Mucosa of descending colon (tissue), 3 donors: ENCODE measurements at regions of chr3 and their contacts with region 1.

Region 1: DNA sequence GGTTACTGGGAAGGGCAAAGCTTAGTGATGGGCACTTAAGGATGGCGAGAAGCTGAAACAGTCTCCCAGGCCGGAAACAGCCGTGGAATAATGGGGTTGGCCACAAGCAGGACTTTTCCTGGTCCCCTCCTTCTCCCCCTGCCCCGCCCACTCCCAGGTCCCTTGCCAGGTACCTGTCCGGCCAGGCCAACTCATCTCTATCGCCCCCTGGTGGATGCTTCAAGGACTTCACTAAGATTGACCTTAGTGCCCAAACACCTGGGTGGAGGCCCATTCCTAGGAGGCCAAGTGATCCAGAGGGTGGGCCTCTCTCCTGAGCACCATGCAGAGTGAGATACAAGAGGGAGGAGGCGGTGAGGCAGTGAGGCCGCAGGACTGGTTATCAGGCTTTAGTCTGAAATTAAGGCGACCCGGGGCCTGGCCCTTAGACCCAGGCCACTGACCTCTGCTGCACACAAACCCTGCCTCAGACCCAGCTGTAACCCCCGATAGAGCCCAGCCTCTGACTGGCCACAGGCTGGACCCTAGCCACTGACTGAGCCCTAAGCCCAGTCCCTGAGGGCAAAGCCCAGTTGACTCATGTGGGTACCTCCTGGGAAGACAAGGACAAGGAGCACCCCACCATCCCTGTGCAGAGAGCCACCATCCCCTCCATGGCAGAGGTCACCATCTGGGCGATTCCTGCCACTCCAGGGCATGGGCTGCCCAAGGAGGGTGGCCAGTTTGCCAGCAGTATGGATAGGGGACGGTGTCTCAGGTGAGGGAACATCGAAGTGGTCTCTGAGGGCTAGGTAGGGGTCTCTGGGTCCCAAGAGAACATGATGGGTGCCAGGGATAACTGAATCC is 37.6 kb downstream of the VIPR1 start:
- DNase-seq: peak; percentile 75 to 89 (median 81)
- ATAC-seq: peak; percentile 81
- H3K4me3 ChIP-seq: no peak overlapping the region
- H3K4me1 ChIP-seq: peaks cover 15% of the 10 kb centered on the region
- CTCF ChIP-seq: peak; percentile 73

Region 2: GRCh38 chr3:42229942-42230688 is 310.0 kb before region 1 on chr3:
- intact Hi-C with region 1: no loop called
- DNase-seq: peak in 1 of 3 donors; percentile 28
- ATAC-seq: peak; percentile 65
- H3K4me3 ChIP-seq: no peak overlapping the region
- H3K4me1 ChIP-seq: no peaks in the 10 kb centered on the region
- CTCF ChIP-seq: no peak

Region 3: DNA sequence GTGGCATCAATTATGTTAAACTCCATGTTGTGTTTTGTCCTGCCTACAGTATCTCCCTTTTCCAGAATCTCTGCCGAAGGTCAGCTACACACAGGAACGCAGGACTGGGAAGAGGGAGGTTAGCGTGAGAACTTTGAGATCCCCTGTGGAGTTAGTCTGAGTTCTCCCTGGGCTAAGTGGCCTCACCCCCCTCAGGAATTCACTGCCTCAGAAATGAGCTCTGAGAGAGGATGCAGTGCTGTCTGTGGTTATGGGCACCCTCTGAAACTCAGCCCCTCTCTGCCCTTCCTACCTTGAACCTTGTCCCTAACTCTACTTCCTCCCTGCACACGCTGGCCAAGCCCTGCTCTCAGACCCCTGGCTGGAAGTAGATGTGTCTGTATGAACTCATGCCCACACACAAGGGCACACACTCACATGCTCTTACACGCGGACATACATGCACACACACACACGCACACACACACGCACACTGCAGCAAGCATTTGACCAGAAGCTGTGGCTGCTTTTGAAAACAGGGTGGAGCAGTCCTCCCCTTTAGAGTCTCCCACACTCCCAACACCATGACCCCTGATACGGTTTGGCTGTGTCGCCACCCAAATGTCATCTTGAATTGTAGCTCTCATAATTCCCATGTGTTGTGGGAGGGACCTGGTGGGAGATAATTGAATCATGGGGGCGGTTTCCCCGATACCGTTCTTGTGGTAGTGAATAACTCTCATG is 42.9 kb before region 1 on chr3:
- intact Hi-C with region 1: loop called in 1 of 2 experiments (anchors 5 kb)
- DNase-seq: no peak
- ATAC-seq: peak; percentile 20
- H3K4me3 ChIP-seq: no peak overlapping the region
- H3K4me1 ChIP-seq: peaks cover 20% of the 10 kb centered on the region
- CTCF ChIP-seq: no peak

Region 4: DNA sequence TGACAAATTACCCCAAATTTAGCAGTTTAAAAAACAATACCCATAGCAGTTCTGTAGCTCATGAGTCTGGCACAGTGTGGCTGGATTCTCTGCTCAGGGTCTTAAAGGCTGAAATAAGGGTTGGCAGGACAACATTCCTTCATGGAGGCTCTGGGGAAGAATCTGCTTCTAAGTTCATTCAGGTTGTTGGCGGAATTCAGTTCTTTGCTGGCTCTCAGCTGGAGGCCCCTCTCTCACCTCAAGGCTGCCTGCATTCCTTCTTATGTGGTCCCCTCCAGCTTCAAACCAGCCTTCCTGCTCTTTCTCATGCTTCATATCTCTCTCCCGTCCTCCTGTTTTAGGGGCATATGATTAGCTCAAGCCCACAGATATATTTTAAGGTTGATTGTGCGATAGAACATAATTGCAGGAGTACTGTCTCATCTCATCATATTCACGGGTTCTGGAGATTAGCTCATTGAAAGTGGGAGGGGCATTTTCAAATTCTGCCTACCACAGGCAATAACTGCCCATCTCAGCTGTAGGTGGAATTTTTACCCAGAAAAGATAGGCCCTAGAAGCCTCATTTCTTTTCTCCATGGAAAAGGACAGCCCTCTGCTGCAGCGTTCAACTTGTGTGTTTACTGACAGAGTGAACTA is 107.8 kb after region 1 on chr3:
- intact Hi-C with region 1: no loop called
- DNase-seq: no peak
- ATAC-seq: no peak
- H3K4me3 ChIP-seq: no peak overlapping the region
- H3K4me1 ChIP-seq: peaks cover 12% of the 10 kb centered on the region
- CTCF ChIP-seq: no peak

Region 5: GRCh38 chr3:42660893-42661292 is 120.8 kb after region 1 on chr3:
- intact Hi-C with region 1: no loop called
- DNase-seq: no peak
- ATAC-seq: no peak
- H3K4me3 ChIP-seq: no peak overlapping the region
- H3K4me1 ChIP-seq: no peaks in the 10 kb centered on the region
- CTCF ChIP-seq: no peak

Region 6: GRCh38 chr3:43001094-43001553 is 461.0 kb after region 1 on chr3:
- intact Hi-C with region 1: no loop called
- DNase-seq: peak; percentile 38 to 60 (median 51)
- ATAC-seq: peak; percentile 72
- H3K4me3 ChIP-seq: no peak overlapping the region
- H3K4me1 ChIP-seq: no peaks in the 10 kb centered on the region
- CTCF ChIP-seq: no peak